Activated CD8-positive, alpha-beta T cell treated with anti-CD3 and anti-CD28 coated beads for 36 hours (primary cell): ENCODE measurements at regions of chr3 and their contacts with region 1.

Region 1: DNA sequence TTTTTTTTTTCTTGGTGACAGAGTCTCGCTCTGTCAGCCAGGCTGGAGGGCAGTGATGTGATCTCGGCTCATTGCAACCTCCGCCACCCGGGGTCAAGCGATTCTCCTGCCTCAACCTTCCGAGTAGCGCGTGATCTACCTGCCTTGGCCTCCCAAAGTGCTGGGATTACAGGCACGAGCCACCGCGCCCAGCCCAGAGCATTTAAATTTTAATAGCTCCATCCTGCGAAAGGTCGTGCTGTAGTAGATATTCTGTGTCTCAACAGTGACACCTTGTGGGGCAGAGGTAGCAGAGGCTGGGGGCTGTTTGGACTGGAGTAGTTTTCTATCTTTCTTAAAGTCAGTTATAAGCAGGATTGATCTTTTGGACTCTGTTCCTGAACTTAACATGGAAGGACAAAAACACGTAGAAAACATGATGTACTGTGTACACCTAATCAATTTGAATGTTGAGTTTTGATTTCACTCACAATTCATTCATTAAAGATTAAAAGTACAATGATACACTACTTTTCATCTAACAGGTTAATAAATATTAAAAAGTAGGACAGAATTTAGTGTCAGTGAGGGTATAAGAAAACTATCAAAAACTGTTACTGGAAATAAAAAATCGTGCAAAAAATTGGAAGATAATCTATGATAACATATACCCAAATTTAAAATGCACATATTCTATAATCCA is 11.0 kb upstream of the PDCD6IP start:
- DNase-seq: peak; percentile 75
- ATAC-seq: peak; percentile 91
- H3K4me3 Mint-ChIP-seq: peak overlapping the region; percentile 31
- H3K27ac Mint-ChIP-seq: no peak overlapping the region
- H3K4me1 Mint-ChIP-seq: peaks cover 4% of the 10 kb centered on the region
- H3K27me3 Mint-ChIP-seq: peaks cover 2% of the 10 kb centered on the region
- CTCF ChIP-seq: peak; percentile 80

Region 2: GRCh38 chr3:33131331-33132018 is 656.0 kb before region 1 on chr3:
- CTCF ChIA-PET with region 1: interaction called, 13 read pairs
- POLR2A ChIA-PET with region 1: no interaction called
- intact Hi-C with region 1: loop called (anchors 2 kb)
- DNase-seq: peak; percentile 50
- ATAC-seq: peak; percentile 80
- H3K4me3 Mint-ChIP-seq: no peak overlapping the region
- H3K27ac Mint-ChIP-seq: no peak overlapping the region
- H3K4me1 Mint-ChIP-seq: no peaks in the 10 kb centered on the region
- H3K27me3 Mint-ChIP-seq: no peaks in the 10 kb centered on the region
- CTCF ChIP-seq: peak; percentile 84

Region 3: GRCh38 chr3:33440323-33441232 is 346.9 kb before region 1 on chr3 and contains the start of gene UBP1:
- CTCF ChIA-PET with region 1: no interaction called
- POLR2A ChIA-PET with region 1: no interaction called
- intact Hi-C with region 1: loop called (anchors 10 kb)
- DNase-seq: peak; percentile 99
- ATAC-seq: peak; percentile 90
- H3K4me3 Mint-ChIP-seq: peak within 1 kb of the TSS; percentile 94
- H3K27ac Mint-ChIP-seq: peak within 1 kb of the TSS; percentile 100
- H3K4me1 Mint-ChIP-seq: peaks cover 34% of the 10 kb centered on the region
- H3K27me3 Mint-ChIP-seq: no peaks in the 10 kb centered on the region
- CTCF ChIP-seq: no peak
- total RNA-seq, gene UBP1: 51.2 to 56.2 TPM

Region 4: GRCh38 chr3:33636125-33636850 is 151.2 kb before region 1 on chr3:
- CTCF ChIA-PET with region 1: interaction called, 44 read pairs
- POLR2A ChIA-PET with region 1: no interaction called
- intact Hi-C with region 1: loop called (anchors 5 kb)
- DNase-seq: no peak
- ATAC-seq: peak; percentile 62
- H3K4me3 Mint-ChIP-seq: no peak overlapping the region
- H3K27ac Mint-ChIP-seq: no peak overlapping the region
- H3K4me1 Mint-ChIP-seq: peaks cover 5% of the 10 kb centered on the region
- H3K27me3 Mint-ChIP-seq: no peaks in the 10 kb centered on the region
- CTCF ChIP-seq: peak; percentile 74

Region 5: GRCh38 chr3:33773637-33774036 is 13.8 kb before region 1 on chr3:
- CTCF ChIA-PET with region 1: interaction called, 72 read pairs
- POLR2A ChIA-PET with region 1: no interaction called
- intact Hi-C with region 1: no loop called
- DNase-seq: no peak
- ATAC-seq: no peak
- H3K4me3 Mint-ChIP-seq: no peak overlapping the region
- H3K27ac Mint-ChIP-seq: no peak overlapping the region
- H3K4me1 Mint-ChIP-seq: no peaks in the 10 kb centered on the region
- H3K27me3 Mint-ChIP-seq: no peaks in the 10 kb centered on the region
- CTCF ChIP-seq: no peak